Activated naive CD4-positive, alpha-beta T cell treated with anti-CD3 and anti-CD28 coated beads for 36 hours (primary cell): ENCODE measurements at regions of chr6 and their contacts with region 1.

Region 1: GRCh38 chr6:144597511-144597910 is 312.4 kb downstream of the UTRN start:
- DNase-seq: peak; percentile 18
- H3K4me3 Mint-ChIP-seq: no peak overlapping the region
- H3K27ac Mint-ChIP-seq: no peak overlapping the region
- H3K4me1 Mint-ChIP-seq: peaks cover 41% of the 10 kb centered on the region
- H3K27me3 Mint-ChIP-seq: no peaks in the 10 kb centered on the region

Region 2: DNA sequence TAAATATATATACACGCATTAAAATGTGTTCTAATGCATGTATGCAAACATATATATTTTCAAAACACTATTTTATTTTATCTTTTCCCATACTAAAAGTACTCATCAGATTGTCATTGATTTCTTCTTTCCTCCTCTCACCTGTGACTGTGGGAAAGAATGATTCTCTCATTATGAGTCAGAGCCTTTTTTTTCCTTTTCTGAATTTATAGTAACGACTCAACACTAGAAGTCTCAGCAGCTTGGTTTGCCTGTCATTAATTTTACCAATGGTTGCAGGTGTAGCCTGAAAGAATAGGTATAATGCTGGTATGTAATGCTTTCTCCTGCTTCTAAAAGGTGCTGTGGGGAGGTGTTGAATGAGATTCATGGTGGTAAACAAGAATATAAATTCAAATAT is 16.3 kb after region 1 on chr6:
- CTCF ChIA-PET with region 1: no interaction called
- intact Hi-C with region 1: loop called (anchors 1 kb)
- DNase-seq: no peak
- H3K4me3 Mint-ChIP-seq: no peak overlapping the region
- H3K27ac Mint-ChIP-seq: no peak overlapping the region
- H3K4me1 Mint-ChIP-seq: peaks cover 15% of the 10 kb centered on the region
- H3K27me3 Mint-ChIP-seq: no peaks in the 10 kb centered on the region

Region 3: DNA sequence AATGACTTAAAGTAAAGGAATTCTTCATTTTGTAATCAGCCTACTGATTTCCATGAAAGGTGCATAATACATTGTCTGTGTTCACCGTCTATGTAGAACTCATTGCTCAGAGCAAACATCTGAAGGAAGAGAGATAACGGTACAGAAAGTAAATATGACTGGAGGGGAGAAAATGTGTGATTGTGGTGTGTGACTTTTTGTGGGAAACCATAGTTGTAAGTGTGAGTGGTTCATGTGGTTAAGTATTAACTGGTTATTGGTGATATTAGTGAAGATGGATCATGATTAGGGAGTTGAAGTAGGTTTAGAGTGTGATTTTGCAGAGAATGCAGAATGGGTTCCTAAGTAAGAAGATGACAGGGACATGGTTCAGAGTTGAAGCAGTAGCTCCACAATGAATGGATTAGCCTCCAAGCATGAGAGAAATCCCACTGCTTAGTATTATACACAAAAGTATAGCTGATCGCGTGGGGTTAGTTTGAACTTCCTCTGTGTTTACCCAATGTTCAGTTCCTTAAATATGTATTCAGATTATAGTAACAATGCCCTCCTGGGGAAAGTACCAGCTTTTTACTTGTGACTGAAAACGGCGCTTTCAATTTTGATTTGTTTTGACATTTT is 56.5 kb after region 1 on chr6:
- CTCF ChIA-PET with region 1: interaction called, 3 read pairs
- intact Hi-C with region 1: loop called (anchors 1 kb)
- DNase-seq: peak; percentile 12
- H3K4me3 Mint-ChIP-seq: peak overlapping the region; percentile 14
- H3K27ac Mint-ChIP-seq: no peak overlapping the region
- H3K4me1 Mint-ChIP-seq: peaks cover 37% of the 10 kb centered on the region
- H3K27me3 Mint-ChIP-seq: no peaks in the 10 kb centered on the region

Region 4: GRCh38 chr6:145015739-145016558 is 418.4 kb after region 1 on chr6:
- CTCF ChIA-PET with region 1: no interaction called
- intact Hi-C with region 1: loop called (anchors 1 kb)
- DNase-seq: peak; percentile 44
- H3K4me3 Mint-ChIP-seq: no peak overlapping the region
- H3K27ac Mint-ChIP-seq: no peak overlapping the region
- H3K4me1 Mint-ChIP-seq: peaks cover 10% of the 10 kb centered on the region
- H3K27me3 Mint-ChIP-seq: peaks cover 13% of the 10 kb centered on the region